ENCODE measurements at regions of chrX and their contacts with region 1.

Region 1: GRCh38 chrX:47658684-47659515 is at the start of gene UXT:
- DNase-seq: peak; percentile 96
- H3K4me3 Mint-ChIP-seq: peak within 1 kb of the TSS; percentile 87
- H3K27ac Mint-ChIP-seq: peak within 1 kb of the TSS; percentile 98
- H3K4me1 Mint-ChIP-seq: peaks cover 48% of the 10 kb centered on the region
- H3K27me3 Mint-ChIP-seq: no peaks in the 10 kb centered on the region
- total RNA-seq, gene UXT: 198 to 210 TPM

Region 2: GRCh38 chrX:47217642-47218279 is 441.1 kb before region 1 on chrX:
- CTCF ChIA-PET with region 1: no interaction called
- POLR2A ChIA-PET with region 1: no interaction called
- intact Hi-C with region 1: loop called (anchors 5 kb)
- DNase-seq: peak; percentile 97
- H3K4me3 Mint-ChIP-seq: peak overlapping the region; percentile 87
- H3K27ac Mint-ChIP-seq: peak overlapping the region; percentile 97
- H3K4me1 Mint-ChIP-seq: peaks cover 32% of the 10 kb centered on the region
- H3K27me3 Mint-ChIP-seq: no peaks in the 10 kb centered on the region

Region 3: DNA sequence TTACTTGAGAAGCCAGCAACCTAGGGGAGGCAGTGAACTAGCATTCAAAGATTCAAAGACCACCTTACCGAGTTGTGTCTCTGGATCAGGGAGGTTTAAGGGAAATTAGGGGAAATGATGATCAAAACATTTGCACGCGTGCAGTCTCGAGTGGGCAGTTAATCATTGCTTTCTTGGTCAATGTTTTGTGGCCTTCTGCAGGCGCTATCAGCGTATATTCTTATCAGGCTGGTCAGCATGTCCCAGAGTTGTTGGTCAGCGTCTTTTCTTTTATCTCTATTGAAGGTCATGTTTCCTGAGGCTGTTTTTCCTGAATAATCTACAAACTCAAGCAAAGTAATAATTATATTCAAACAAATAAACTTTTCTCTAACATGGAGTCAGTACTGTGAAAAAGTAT is 93.8 kb after region 1 on chrX:
- CTCF ChIA-PET with region 1: no interaction called
- POLR2A ChIA-PET with region 1: no interaction called
- intact Hi-C with region 1: no loop called
- DNase-seq: no peak
- H3K4me3 Mint-ChIP-seq: no peak overlapping the region
- H3K27ac Mint-ChIP-seq: no peak overlapping the region
- H3K4me1 Mint-ChIP-seq: no peaks in the 10 kb centered on the region
- H3K27me3 Mint-ChIP-seq: peaks cover 7% of the 10 kb centered on the region

Region 4: GRCh38 chrX:47836164-47837072 is 177.5 kb after region 1 on chrX and contains the start of gene ZNF81:
- CTCF ChIA-PET with region 1: no interaction called
- POLR2A ChIA-PET with region 1: no interaction called
- intact Hi-C with region 1: loop called (anchors 5 kb)
- DNase-seq: peak; percentile 95
- H3K4me3 Mint-ChIP-seq: peak within 1 kb of the TSS; percentile 97
- H3K27ac Mint-ChIP-seq: peak within 1 kb of the TSS; percentile 97
- H3K4me1 Mint-ChIP-seq: peaks cover 19% of the 10 kb centered on the region
- H3K27me3 Mint-ChIP-seq: no peaks in the 10 kb centered on the region
- total RNA-seq, gene ZNF81: 6.0 to 7.2 TPM

Measured in activated CD4-positive, alpha-beta memory T cell treated with anti-CD3 and anti-CD28 coated beads for 36 hours (primary cell).